ENCODE measurements at regions of chr15 and their contacts with region 1.

Region 1: GRCh38 chr15:81274931-81275707 is 48.8 kb downstream of the STARD5 start:
- DNase-seq: peak; percentile 79
- ATAC-seq: peak; percentile 98
- H3K4me3 ChIP-seq: no peak overlapping the region
- H3K27ac ChIP-seq: no peak overlapping the region
- H3K4me1 ChIP-seq: peaks cover 2 to 8% of the 10 kb centered on the region in 2 experiments; a peak in 2 of 4 replicates
- H3K27me3 ChIP-seq: no peaks in the 10 kb centered on the region
- CTCF ChIP-seq: peak; percentile 78 to 88 (median 83)
- POLR2A ChIP-seq: no peak
- RAD21 ChIP-seq: peak; percentile 93

Region 2: GRCh38 chr15:81336568-81336967 is 61.4 kb after region 1 on chr15:
- CTCF ChIA-PET with region 1: interaction called, 17 read pairs
- POLR2A ChIA-PET with region 1: no interaction called
- RAD21 ChIA-PET with region 1: interaction called, 6 to 13 read pairs
- intact Hi-C with region 1: loop called (anchors 1 kb)
- DNase-seq: peak; percentile 3
- ATAC-seq: peak; percentile 80
- H3K4me3 ChIP-seq: no peak overlapping the region
- H3K27ac ChIP-seq: no peak overlapping the region
- H3K4me1 ChIP-seq: peaks cover 15 to 16% of the 10 kb centered on the region in 2 experiments
- H3K27me3 ChIP-seq: no peaks in the 10 kb centered on the region
- CTCF ChIP-seq: peak; percentile 48 to 59 (median 59); a peak in 5 of 6 replicates
- POLR2A ChIP-seq: no peak
- RAD21 ChIP-seq: peak; percentile 73

Region 3: GRCh38 chr15:81394603-81395002 is 119.5 kb after region 1 on chr15:
- CTCF ChIA-PET with region 1: interaction called, 67 read pairs
- POLR2A ChIA-PET with region 1: no interaction called
- RAD21 ChIA-PET with region 1: interaction called in 1 of 2 experiments, 5 read pairs
- intact Hi-C with region 1: no loop called
- DNase-seq: no peak
- ATAC-seq: no peak
- H3K4me3 ChIP-seq: no peak overlapping the region
- H3K27ac ChIP-seq: no peak overlapping the region
- H3K4me1 ChIP-seq: no peaks in the 10 kb centered on the region
- H3K27me3 ChIP-seq: no peaks in the 10 kb centered on the region
- CTCF ChIP-seq: no peak
- POLR2A ChIP-seq: no peak
- RAD21 ChIP-seq: no peak

Region 4: DNA sequence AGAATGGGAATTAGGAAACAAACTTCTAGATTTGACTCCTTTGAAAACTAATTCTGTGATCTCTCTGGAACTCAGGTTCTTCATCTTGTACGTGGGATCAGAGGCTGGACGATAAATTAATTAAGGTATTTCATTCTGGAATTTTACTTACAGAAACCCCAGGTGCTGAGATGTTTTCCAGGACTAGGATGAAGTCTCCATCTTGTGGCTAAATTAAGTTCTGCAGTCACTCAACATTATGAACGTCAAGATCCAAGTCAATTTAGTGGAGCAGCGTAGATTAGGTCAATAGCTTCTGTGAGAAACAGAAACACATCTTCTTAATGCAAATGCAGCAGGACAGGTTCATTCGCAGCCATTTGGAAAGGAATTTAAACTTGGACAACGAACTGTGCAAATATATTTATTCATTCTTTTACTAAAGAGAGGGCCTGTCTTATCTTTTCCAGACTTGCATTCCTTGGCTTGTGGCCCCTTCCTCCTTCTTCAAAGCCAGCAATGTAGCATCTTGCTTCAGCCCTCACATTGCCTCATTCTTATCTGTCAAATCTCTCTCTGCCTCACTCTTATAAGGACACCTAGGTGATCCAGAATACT is 125.6 kb after region 1 on chr15:
- CTCF ChIA-PET with region 1: interaction called, 67 read pairs
- POLR2A ChIA-PET with region 1: no interaction called
- RAD21 ChIA-PET with region 1: interaction called, 5 to 7 read pairs
- intact Hi-C with region 1: loop called (anchors 1 kb)
- DNase-seq: peak; percentile 52
- ATAC-seq: peak; percentile 67
- H3K4me3 ChIP-seq: no peak overlapping the region
- H3K27ac ChIP-seq: no peak overlapping the region
- H3K4me1 ChIP-seq: no peaks in the 10 kb centered on the region
- H3K27me3 ChIP-seq: no peaks in the 10 kb centered on the region
- CTCF ChIP-seq: peak; percentile 57 to 79 (median 67)
- POLR2A ChIP-seq: no peak
- RAD21 ChIP-seq: peak; percentile 85

Region 5: GRCh38 chr15:81480645-81481053 is 205.5 kb after region 1 on chr15:
- CTCF ChIA-PET with region 1: no interaction called
- POLR2A ChIA-PET with region 1: no interaction called
- RAD21 ChIA-PET with region 1: no interaction called
- intact Hi-C with region 1: loop called (anchors 5 kb)
- DNase-seq: peak; percentile 24
- ATAC-seq: peak; percentile 78
- H3K4me3 ChIP-seq: no peak overlapping the region
- H3K27ac ChIP-seq: no peak overlapping the region
- H3K4me1 ChIP-seq: no peaks in the 10 kb centered on the region
- H3K27me3 ChIP-seq: peaks cover 27% of the 10 kb centered on the region; the same call in 1 of the 2 replicates
- CTCF ChIP-seq: peak; percentile 62 to 89 (median 72); a peak in 5 of 6 replicates
- POLR2A ChIP-seq: no peak
- RAD21 ChIP-seq: peak; percentile 80

Region 6: DNA sequence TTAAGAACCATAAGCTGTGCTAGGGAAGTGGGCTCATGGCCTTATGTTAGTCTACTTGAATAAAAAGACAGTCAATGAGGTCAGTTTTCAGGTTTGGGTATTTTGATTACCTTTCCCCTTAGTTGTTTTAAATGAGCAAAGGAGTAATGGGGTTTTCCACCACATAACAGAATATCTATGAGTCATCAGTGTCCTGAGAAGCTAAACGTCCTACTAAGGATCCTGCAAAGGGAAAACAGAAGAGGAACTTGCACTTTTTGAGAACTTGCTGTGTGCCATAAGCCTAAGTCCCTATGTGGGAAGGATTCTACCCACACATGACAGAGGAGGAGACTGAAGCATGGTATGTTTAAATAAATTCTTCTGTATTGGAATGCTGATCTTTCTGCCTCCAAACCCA is 391.7 kb after region 1 on chr15:
- CTCF ChIA-PET with region 1: no interaction called
- POLR2A ChIA-PET with region 1: no interaction called
- RAD21 ChIA-PET with region 1: no interaction called
- intact Hi-C with region 1: no loop called
- DNase-seq: no peak
- ATAC-seq: no peak
- H3K4me3 ChIP-seq: no peak overlapping the region
- H3K27ac ChIP-seq: no peak overlapping the region
- H3K4me1 ChIP-seq: no peaks in the 10 kb centered on the region
- H3K27me3 ChIP-seq: no peaks in the 10 kb centered on the region
- CTCF ChIP-seq: no peak
- POLR2A ChIP-seq: no peak
- RAD21 ChIP-seq: no peak

Region 7: DNA sequence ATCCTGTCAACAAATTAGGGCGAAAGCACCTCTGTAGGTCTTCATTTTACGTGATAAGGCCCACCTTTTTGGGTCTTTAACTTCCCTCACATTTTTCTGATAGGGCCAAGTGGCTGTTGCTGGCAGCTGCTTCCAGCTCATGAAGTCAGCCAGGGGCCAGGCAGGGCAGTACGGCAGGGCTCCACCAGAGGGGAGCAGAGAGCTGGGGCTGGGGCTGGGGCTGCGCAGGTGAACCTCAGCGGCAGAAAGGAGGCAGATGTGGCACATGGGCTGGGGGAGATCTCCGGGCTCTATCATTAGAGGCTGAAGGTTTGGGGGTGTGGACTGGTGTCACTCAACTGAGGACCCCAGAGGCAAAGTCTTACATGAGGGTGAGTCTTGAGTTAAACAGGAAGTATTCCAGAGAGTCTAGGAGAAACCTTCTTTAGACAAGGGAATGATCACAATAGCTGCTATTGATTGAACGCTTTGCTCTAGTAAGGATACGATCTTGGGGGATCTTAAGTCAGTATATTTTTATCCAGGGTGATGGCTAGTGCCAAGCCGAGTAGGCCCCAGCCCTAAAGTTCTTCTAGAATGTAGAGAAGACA is 833.5 kb after region 1 on chr15:
- CTCF ChIA-PET with region 1: no interaction called
- POLR2A ChIA-PET with region 1: no interaction called
- RAD21 ChIA-PET with region 1: no interaction called
- intact Hi-C with region 1: loop called (anchors 5 kb)
- DNase-seq: peak; percentile 15
- ATAC-seq: peak; percentile 98
- H3K4me3 ChIP-seq: no peak overlapping the region
- H3K27ac ChIP-seq: no peak overlapping the region
- H3K4me1 ChIP-seq: no peaks in the 10 kb centered on the region
- H3K27me3 ChIP-seq: no peaks in the 10 kb centered on the region
- CTCF ChIP-seq: peak; percentile 95 to 97 (median 97)
- POLR2A ChIP-seq: no peak
- RAD21 ChIP-seq: peak; percentile 92

Measured in HCT116 (cell line).